ENCODE measurements at regions of chr16 and their contacts with region 1.

Region 1: GRCh38 chr16:51818342-51818944 is 667.4 kb upstream of the SALL1 start:
- DNase-seq: peak in 4 of 10 donors; percentile 23 to 64 (median 57)

Region 2: DNA sequence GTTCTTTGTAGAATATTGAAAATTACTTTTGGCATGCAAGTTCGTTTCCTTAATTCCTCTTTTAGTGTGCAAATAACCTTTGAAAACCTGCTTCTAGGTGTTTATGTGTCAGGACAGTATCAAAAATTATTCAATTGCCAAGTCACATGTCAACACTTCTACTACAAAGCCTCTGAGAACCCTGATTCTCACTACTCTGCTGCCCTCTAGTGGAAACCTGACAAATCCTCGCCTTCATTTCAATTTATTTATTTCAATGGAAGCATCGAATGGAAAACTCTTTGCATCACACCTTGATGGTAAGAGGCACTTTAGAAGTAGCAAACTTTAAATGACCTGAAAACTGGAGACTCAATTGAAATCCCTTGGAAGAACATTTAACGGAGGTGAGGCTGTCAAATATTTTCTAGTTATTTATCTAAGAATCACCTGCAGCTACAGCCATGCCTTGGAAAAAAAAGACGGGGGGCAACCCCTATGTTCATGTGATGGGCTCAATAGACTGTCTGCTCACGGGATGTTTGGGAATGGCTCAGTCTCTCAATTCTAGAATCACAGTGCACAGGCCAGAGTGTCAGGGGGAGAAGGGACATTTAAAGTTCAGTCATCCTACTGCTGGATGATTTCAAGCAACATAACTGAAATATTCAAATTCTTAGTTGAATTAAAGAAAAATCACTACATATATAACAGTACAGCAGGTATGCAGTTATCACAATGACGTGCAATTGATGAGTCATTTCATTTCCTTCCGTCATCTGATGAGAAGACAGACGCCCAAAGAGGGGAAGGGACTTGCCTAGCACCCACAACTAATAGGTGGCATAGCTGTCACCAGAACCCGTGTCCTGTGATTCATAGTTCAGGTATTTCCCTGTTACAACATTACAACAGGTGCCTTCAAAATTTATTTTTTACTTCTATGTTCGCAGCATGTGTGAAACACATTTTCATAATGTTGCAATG is 164.6 kb after region 1 on chr16:
- intact Hi-C with region 1: loop called (anchors 5 kb)
- DNase-seq: peak in 3 of 10 donors; percentile 12 to 51 (median 45)

Measured in posterior cingulate gyrus (tissue), 11 donors.